CD4-positive, alpha-beta T cell (primary cell): ENCODE measurements at regions of chr2 and their contacts with region 1.

Region 1: GRCh38 chr2:235746257-235747084 is 252.6 kb downstream of the AGAP1 start:
- DNase-seq: peak in 10 of 14 experiments; percentile 15 to 74 (median 27)
- ATAC-seq: peak; percentile 49
- H3K4me3 ChIP-seq: no peak overlapping the region
- H3K4me3 Mint-ChIP-seq: no peak overlapping the region
- H3K27ac ChIP-seq: no peak overlapping the region
- H3K27ac Mint-ChIP-seq: no peak overlapping the region
- H3K4me1 ChIP-seq: peaks cover 4% of the 10 kb centered on the region
- H3K4me1 Mint-ChIP-seq: no peaks in the 10 kb centered on the region
- H3K27me3 ChIP-seq: peaks cover 2 to 3% of the 10 kb centered on the region in 2 experiments
- H3K27me3 Mint-ChIP-seq: peaks cover 25% of the 10 kb centered on the region
- CTCF ChIP-seq: peak; percentile 64

Region 2: GRCh38 chr2:235135990-235136561 is 610.4 kb before region 1 on chr2:
- CTCF ChIA-PET with region 1: no interaction called
- POLR2A ChIA-PET with region 1: no interaction called
- intact Hi-C with region 1: loop called in 1 of 2 experiments (anchors 5 kb)
- DNase-seq: peak; percentile 3 to 67 (median 24)
- ATAC-seq: no peak
- H3K4me3 ChIP-seq: no peak overlapping the region
- H3K4me3 Mint-ChIP-seq: no peak overlapping the region
- H3K27ac ChIP-seq: no peak overlapping the region
- H3K27ac Mint-ChIP-seq: no peak overlapping the region
- H3K4me1 ChIP-seq: no peaks in the 10 kb centered on the region
- H3K4me1 Mint-ChIP-seq: no peaks in the 10 kb centered on the region
- H3K27me3 ChIP-seq: peaks cover 7% of the 10 kb centered on the region in 2 experiments
- H3K27me3 Mint-ChIP-seq: peaks cover 58% of the 10 kb centered on the region
- CTCF ChIP-seq: peak; percentile 49

Region 3: DNA sequence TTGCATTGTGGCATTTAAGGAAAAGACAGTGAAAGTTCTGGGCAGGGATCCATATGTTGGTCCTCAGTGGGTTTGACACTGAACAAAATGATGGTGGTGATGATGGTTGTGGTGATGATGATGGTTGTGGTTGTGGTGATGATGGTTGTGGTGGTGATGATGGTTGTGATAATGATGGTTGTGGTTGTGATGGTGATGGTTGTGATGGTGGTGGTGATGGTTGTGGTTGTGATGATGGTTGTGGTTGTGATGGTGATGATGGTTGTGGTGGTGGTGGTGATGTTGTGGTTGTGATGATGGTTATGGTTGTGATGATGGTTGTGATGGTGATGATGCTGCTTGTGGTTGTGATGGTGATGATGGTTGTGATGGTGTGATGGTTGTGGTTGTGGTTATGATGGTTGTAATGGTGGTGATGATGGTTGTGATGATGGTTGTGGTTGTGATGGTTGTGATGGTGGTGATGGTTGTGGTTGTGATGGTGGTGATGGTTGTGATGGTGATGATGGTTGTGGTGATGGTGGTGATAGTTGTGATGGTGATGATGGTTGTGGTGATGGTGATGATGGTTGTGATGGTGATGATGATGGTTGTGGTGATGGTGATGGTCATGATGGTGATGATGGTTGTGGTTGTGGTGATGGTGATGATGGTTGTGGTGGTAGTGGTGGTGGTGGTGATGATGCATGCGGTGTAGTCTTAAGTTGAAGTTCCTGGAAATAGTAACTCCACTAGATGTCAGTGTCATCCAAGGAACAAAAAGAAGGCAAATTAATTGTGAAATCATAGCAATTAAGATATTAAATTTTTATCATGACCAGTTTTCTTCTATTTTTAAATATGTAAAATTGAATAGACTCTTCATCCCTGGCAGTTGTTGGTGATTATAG is 56.3 kb after region 1 on chr2:
- CTCF ChIA-PET with region 1: no interaction called
- POLR2A ChIA-PET with region 1: no interaction called
- intact Hi-C with region 1: no loop called
- DNase-seq: no peak
- ATAC-seq: no peak
- H3K4me3 ChIP-seq: no peak overlapping the region
- H3K4me3 Mint-ChIP-seq: no peak overlapping the region
- H3K27ac ChIP-seq: no peak overlapping the region
- H3K27ac Mint-ChIP-seq: no peak overlapping the region
- H3K4me1 ChIP-seq: no peaks in the 10 kb centered on the region
- H3K4me1 Mint-ChIP-seq: no peaks in the 10 kb centered on the region
- H3K27me3 ChIP-seq: peaks cover 0 to 4% of the 10 kb centered on the region in 2 experiments
- H3K27me3 Mint-ChIP-seq: peaks cover 19% of the 10 kb centered on the region
- CTCF ChIP-seq: no peak